ENCODE measurements at regions of chr12 and their contacts with region 1.

Region 1: GRCh38 chr12:82685790-82686167 is 927 bp upstream of the TMTC2 start:
- DNase-seq: peak; percentile 86
- ATAC-seq: peak; percentile 69
- H3K4me3 ChIP-seq: peak overlapping the region; percentile 68 to 69
- H3K27ac ChIP-seq: peak overlapping the region; percentile 80
- H3K4me1 ChIP-seq: peaks cover 4 to 18% of the 10 kb centered on the region in 2 experiments; a peak in 3 of 4 replicates
- H3K27me3 ChIP-seq: no peaks in the 10 kb centered on the region
- CTCF ChIP-seq: peak; percentile 80 to 89 (median 82)
- POLR2A ChIP-seq: no peak
- RAD21 ChIP-seq: peak; percentile 95

Region 2: GRCh38 chr12:81953541-81953940 is 732.2 kb before region 1 on chr12:
- CTCF ChIA-PET with region 1: no interaction called
- POLR2A ChIA-PET with region 1: no interaction called
- RAD21 ChIA-PET with region 1: no interaction called
- intact Hi-C with region 1: no loop called
- DNase-seq: no peak
- ATAC-seq: no peak
- H3K4me3 ChIP-seq: no peak overlapping the region
- H3K27ac ChIP-seq: no peak overlapping the region
- H3K4me1 ChIP-seq: no peaks in the 10 kb centered on the region
- H3K27me3 ChIP-seq: no peaks in the 10 kb centered on the region
- CTCF ChIP-seq: no peak
- POLR2A ChIP-seq: no peak
- RAD21 ChIP-seq: no peak

Region 3: GRCh38 chr12:82383930-82384552 is 301.7 kb before region 1 on chr12:
- CTCF ChIA-PET with region 1: no interaction called
- POLR2A ChIA-PET with region 1: no interaction called
- RAD21 ChIA-PET with region 1: no interaction called
- intact Hi-C with region 1: loop called (anchors 5 kb)
- DNase-seq: no peak
- ATAC-seq: peak; percentile 75
- H3K4me3 ChIP-seq: no peak overlapping the region
- H3K27ac ChIP-seq: no peak overlapping the region
- H3K4me1 ChIP-seq: no peaks in the 10 kb centered on the region
- H3K27me3 ChIP-seq: no peaks in the 10 kb centered on the region
- CTCF ChIP-seq: peak; percentile 32 to 60 (median 53); a peak in 5 of 6 replicates
- POLR2A ChIP-seq: no peak
- RAD21 ChIP-seq: peak; percentile 70

Region 4: GRCh38 chr12:82675246-82675645 is 10.5 kb before region 1 on chr12:
- CTCF ChIA-PET with region 1: interaction called, 23 read pairs
- POLR2A ChIA-PET with region 1: interaction called, 3 read pairs
- RAD21 ChIA-PET with region 1: no interaction called
- intact Hi-C with region 1: no loop called
- DNase-seq: no peak
- ATAC-seq: no peak
- H3K4me3 ChIP-seq: no peak overlapping the region
- H3K27ac ChIP-seq: no peak overlapping the region
- H3K4me1 ChIP-seq: no peaks in the 10 kb centered on the region
- H3K27me3 ChIP-seq: no peaks in the 10 kb centered on the region
- CTCF ChIP-seq: no peak
- POLR2A ChIP-seq: no peak
- RAD21 ChIP-seq: no peak

Region 5: GRCh38 chr12:83261998-83262397 is 576.2 kb after region 1 on chr12:
- CTCF ChIA-PET with region 1: no interaction called
- POLR2A ChIA-PET with region 1: no interaction called
- RAD21 ChIA-PET with region 1: interaction called in 1 of 2 experiments, 4 read pairs
- intact Hi-C with region 1: loop called (anchors 5 kb)
- DNase-seq: peak; percentile 6
- ATAC-seq: peak; percentile 89
- H3K4me3 ChIP-seq: no peak overlapping the region
- H3K27ac ChIP-seq: no peak overlapping the region
- H3K4me1 ChIP-seq: no peaks in the 10 kb centered on the region
- H3K27me3 ChIP-seq: no peaks in the 10 kb centered on the region
- CTCF ChIP-seq: peak; percentile 6 to 55 (median 47); a peak in 4 of 6 replicates
- POLR2A ChIP-seq: no peak
- RAD21 ChIP-seq: peak; percentile 36

Region 6: GRCh38 chr12:84397263-84397662 is 1711.5 kb after region 1 on chr12:
- CTCF ChIA-PET with region 1: no interaction called
- POLR2A ChIA-PET with region 1: no interaction called
- RAD21 ChIA-PET with region 1: no interaction called
- intact Hi-C with region 1: loop called (anchors 10 kb)
- DNase-seq: no peak
- ATAC-seq: no peak
- H3K4me3 ChIP-seq: no peak overlapping the region
- H3K27ac ChIP-seq: no peak overlapping the region
- H3K4me1 ChIP-seq: no peaks in the 10 kb centered on the region
- H3K27me3 ChIP-seq: no peaks in the 10 kb centered on the region
- CTCF ChIP-seq: peak in 2 of 3 experiments; percentile 20 to 40; a peak in 3 of 6 replicates
- POLR2A ChIP-seq: no peak
- RAD21 ChIP-seq: peak; percentile 45

Measured in HCT116 (cell line).